ENCODE measurements at regions of chr17 and their contacts with region 1.

Region 1: DNA sequence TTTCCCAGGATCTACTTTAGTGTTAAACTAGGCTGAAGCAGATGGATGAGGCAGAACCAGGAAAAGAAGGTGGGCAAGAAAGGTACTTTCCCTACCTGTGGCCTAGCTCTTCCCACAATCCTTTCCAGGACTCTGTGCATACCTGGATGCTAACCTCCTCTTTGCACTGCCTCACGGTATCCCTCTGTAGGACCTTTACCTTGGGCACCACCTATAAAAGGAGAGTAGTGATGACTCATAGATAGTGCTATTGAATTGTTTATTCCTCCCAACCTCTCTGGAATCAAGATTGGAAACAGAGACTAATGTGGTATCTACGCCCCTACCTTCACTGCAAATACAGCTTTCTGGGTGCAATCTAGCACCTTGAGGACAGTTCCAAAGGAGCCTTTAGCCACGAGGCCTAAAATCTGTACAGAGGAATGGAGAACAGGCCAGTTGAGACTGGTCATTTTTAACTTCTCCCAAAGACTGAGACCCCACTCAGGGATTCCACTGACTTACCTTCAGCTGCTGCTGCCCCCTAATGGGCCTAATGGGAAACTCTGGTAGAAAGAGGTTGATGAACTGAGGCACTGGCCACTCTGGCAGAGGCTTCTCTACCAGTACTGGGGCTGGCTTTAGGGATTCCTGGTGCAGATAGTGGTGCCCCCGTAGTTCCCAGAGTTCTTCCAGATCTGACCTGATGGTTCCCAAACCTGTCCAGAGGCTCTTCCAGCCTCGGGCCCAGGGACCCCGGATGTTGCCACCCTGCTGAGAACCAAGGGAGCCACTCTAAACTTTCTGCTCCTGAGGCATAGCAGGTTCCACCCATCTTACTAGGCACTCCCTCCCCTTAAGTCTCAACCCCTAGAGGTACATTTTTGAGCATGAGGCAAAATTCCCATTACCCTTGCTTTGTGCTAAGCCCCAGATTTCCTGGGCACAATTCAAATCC is 781 bp downstream of the RSKR start:
- DNase-seq: no peak
- ATAC-seq: peak; percentile 71
- H3K4me3 ChIP-seq: no peak overlapping the region
- H3K27ac ChIP-seq: no peak overlapping the region
- H3K4me1 ChIP-seq: no peaks in the 10 kb centered on the region
- H3K27me3 ChIP-seq: no peaks in the 10 kb centered on the region

Region 2: GRCh38 chr17:28494445-28495188 is 118.6 kb before region 1 on chr17:
- intact Hi-C with region 1: loop called (anchors 5 kb)
- DNase-seq: peak; percentile 82 to 90
- ATAC-seq: no peak
- H3K4me3 ChIP-seq: no peak overlapping the region
- H3K27ac ChIP-seq: no peak overlapping the region
- H3K4me1 ChIP-seq: no peaks in the 10 kb centered on the region
- H3K27me3 ChIP-seq: peaks cover 0 to 1% of the 10 kb centered on the region in 2 donors

Region 3: DNA sequence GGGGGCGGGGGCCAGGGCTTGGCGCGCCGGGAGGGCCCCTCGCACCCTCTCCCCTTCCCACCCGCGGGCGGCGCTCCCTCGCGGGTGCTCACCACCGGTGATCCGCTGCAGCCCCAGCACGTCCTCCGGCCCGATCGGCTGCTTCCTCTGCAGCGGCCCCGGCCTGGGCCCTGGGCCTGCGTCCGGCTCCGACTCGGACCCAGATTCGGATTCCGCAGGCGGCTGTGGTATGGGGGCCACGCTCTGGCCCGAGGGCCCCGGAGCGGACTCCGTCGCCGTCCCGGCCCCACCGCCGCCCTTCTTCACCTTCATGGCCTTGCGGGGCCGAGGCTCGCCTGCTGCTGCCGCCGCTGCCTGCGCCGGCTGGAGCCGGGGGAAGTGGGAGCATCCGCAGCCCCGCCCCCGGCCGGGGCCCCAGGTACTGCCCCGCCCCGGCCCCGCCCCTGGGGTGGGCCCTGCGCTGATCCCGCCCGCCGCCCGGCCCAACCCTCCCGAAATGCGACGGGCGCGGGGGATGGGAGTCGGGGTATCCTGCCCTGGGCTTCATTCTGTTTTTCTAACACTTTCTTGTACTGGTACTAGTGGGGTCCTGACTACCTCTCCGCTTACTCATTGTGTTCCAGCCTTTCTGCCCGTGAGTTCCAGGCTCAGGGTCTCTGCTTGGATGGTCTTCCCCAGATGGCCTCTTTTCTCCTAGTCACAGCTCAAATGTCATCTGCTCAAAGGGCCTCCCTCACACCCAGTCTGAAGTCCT is 60.8 kb before region 1 on chr17 and contains the start of gene UNC119:
- intact Hi-C with region 1: loop called (anchors 2 to 5 kb)
- DNase-seq: peak; percentile 80 to 93
- ATAC-seq: peak; percentile 91
- H3K4me3 ChIP-seq: peak within 1 kb of the TSS; percentile 71 to 86
- H3K27ac ChIP-seq: peak within 1 kb of the TSS in 1 of 2 donors; percentile 29
- H3K4me1 ChIP-seq: no peaks in the 10 kb centered on the region
- H3K27me3 ChIP-seq: no peaks in the 10 kb centered on the region
- total RNA-seq, gene UNC119: 17.4 to 25.7 TPM